Activated CD4-positive, alpha-beta memory T cell treated with anti-CD3 and anti-CD28 coated beads, Interleukin-2, amount 10 ng/mL, durations not matched to agents 7 days and 5 days (primary cell): ENCODE measurements at regions of chr7 and their contacts with region 1.

Region 1: GRCh38 chr7:12458520-12459131 is 55.0 kb upstream of the VWDE start:
- DNase-seq: no peak
- H3K4me3 Mint-ChIP-seq: no peak overlapping the region
- H3K27ac Mint-ChIP-seq: no peak overlapping the region
- H3K4me1 Mint-ChIP-seq: no peaks in the 10 kb centered on the region
- H3K27me3 Mint-ChIP-seq: peaks cover 8% of the 10 kb centered on the region

Region 2: DNA sequence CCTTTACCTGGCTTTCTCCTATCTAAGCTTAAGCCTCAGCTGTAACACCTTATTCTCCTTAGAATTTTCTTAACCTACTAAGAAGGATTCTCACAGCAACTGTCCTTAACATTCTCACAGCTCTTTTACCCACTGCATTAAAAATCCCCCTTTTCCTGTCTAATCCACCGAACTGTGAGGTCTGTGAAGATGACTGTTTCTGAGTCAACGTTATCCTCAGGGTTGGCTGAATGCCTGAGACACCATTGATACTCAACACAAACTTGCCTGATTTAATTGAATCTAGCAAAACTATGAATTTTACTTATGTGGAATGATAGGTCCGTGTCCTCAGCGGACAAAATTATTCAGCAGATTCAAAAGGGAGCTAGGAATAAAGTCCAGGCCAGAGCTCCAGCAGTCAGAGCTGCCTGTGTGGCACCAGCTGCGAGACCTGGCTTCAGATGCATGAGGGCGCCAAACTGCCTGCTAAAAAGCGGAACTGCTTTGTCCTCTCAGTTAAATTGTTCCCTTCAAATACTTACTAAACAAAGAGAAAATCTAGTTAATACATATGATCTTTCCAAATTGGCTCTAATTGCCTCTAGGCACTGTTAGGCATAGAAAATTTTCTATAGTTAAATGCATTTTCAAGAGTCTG is 21.6 kb before region 1 on chr7:
- CTCF ChIA-PET with region 1: interaction called, 18 read pairs
- POLR2A ChIA-PET with region 1: no interaction called
- DNase-seq: no peak
- H3K4me3 Mint-ChIP-seq: no peak overlapping the region
- H3K27ac Mint-ChIP-seq: no peak overlapping the region
- H3K4me1 Mint-ChIP-seq: no peaks in the 10 kb centered on the region
- H3K27me3 Mint-ChIP-seq: peaks cover 6% of the 10 kb centered on the region

Region 3: DNA sequence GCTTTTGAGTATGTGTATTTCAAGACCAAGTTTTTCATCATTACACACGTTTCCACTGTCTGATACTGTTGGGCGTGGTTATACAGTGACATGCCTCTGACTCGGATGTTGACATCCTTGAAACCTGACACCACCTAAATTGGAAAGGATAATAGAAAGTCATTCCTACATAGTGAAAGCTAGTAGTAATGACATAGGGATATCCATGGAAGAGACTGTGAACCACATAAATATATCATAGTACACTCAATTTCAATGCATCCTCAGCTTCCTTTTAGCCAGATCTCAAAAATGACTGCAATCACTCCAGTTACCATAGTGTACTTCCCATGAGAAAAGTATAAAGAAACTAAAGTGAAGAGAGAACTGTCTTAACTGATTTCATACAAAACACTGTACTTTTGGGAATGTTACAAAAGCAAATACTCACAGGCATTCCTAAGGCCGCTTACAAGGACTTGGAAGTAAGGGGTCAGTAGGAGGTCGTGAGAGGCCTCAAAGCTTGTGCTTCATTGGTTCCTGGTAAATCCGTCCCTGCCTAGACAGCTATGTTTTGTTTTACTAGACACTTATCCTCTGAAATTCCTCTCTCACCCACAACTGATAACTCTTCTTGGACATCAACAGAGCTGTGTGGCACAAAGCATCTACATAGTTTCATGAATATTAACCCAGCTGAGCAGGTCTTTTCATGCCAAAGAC is 16.9 kb after region 1 on chr7:
- CTCF ChIA-PET with region 1: interaction called, 17 read pairs
- POLR2A ChIA-PET with region 1: no interaction called
- DNase-seq: no peak
- H3K4me3 Mint-ChIP-seq: no peak overlapping the region
- H3K27ac Mint-ChIP-seq: no peak overlapping the region
- H3K4me1 Mint-ChIP-seq: no peaks in the 10 kb centered on the region
- H3K27me3 Mint-ChIP-seq: no peaks in the 10 kb centered on the region

Region 4: DNA sequence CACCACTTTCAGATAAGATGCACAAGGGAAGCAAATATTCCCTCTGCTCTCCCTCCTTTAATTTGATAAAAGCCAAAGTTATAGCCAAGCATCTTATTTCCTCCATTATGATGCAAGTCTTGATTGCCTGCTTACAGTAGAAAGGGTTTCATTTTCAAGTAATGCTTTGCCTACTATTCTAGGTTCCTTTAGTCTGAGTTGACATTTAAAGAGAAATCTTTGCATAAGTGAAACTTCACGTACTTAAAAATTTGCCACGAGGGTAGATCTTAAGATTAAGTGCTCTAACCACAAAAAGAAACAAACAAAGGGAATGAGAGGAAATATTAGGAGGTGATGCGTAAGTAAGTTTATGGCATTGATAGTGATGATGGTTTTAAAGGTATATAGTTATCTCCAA is 23.1 kb after region 1 on chr7:
- CTCF ChIA-PET with region 1: interaction called, 13 read pairs
- POLR2A ChIA-PET with region 1: no interaction called
- DNase-seq: no peak
- H3K4me3 Mint-ChIP-seq: peak overlapping the region; percentile 28
- H3K27ac Mint-ChIP-seq: no peak overlapping the region
- H3K4me1 Mint-ChIP-seq: peaks cover 8% of the 10 kb centered on the region
- H3K27me3 Mint-ChIP-seq: no peaks in the 10 kb centered on the region

Region 5: DNA sequence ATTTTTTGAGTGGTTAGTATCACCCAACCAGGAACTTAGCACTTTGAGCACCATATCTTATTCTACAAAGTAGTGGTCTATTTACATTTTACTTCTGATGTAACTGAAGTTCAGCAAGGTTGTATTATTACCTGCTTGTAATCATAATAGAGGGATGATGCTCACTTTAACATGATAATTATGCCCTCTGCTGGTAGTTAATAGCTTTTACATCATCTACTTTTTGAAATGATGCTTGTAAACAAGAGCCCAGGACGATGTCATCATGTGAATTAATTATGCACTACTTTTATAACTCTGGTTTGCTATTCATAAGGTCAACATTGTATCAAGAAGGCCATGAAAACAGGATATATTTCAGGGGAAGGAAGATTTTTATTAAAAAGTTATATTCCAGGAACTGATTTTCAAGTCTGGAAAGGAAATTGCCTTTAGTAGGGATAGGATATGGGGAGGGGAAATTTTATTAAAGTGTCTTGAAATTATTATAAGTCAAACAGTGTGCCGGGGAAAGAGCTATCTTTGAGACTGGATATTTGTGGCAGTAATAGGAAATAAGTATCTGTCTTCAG is 31.6 kb after region 1 on chr7:
- CTCF ChIA-PET with region 1: interaction called, 43 read pairs
- POLR2A ChIA-PET with region 1: no interaction called
- DNase-seq: no peak
- H3K4me3 Mint-ChIP-seq: no peak overlapping the region
- H3K27ac Mint-ChIP-seq: no peak overlapping the region
- H3K4me1 Mint-ChIP-seq: no peaks in the 10 kb centered on the region
- H3K27me3 Mint-ChIP-seq: peaks cover 5% of the 10 kb centered on the region

Region 6: DNA sequence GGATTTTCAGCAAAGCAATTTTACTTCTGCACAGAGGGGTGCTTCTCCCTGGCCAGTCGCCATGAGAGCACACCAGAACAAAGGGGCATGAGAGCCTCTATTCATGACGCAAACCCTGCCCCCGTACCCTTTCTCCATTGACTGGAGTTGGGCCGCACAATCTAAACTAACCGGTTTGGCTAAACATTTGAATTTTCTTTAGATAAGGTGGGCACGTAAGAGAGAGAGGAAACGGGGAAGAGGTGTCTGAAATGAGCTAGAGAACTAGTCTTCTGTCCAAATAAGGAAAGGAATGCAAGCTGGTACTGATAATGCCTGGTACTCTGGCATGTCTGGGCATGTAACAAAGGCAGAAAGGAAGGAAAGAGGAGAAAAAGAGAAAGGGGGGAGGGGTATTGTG is 98.7 kb after region 1 on chr7:
- CTCF ChIA-PET with region 1: no interaction called
- POLR2A ChIA-PET with region 1: no interaction called
- DNase-seq: no peak
- H3K4me3 Mint-ChIP-seq: no peak overlapping the region
- H3K27ac Mint-ChIP-seq: no peak overlapping the region
- H3K4me1 Mint-ChIP-seq: no peaks in the 10 kb centered on the region
- H3K27me3 Mint-ChIP-seq: no peaks in the 10 kb centered on the region